Mammary epithelial cell (primary cell): ENCODE measurements at regions of chr9 and their contacts with region 1.

Region 1: DNA sequence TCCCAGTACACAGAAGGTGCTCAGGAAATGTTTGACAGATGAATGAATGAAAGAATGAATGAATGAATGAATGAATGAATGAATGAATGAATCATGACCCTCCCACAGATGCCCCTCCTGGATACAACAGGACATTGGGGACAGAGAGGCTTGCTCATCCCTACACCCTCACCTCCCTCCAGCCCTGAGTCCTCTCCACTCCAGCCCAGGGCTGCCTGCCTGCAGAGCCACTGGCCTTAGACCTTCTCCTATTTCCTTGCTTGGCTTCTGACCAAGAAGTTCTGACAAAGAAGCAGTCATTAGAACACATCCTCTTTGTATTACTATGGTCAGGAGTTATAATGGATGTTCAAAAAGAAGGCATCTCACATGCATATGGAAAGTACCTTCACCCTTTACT is 240.7 kb upstream of the DAPK1 start:
- DNase-seq: peak; percentile 78
- H3K4me3 ChIP-seq: no peak overlapping the region
- H3K27ac ChIP-seq: no peak overlapping the region
- H3K4me1 ChIP-seq: peaks cover 12% of the 10 kb centered on the region
- H3K27me3 ChIP-seq: no peaks in the 10 kb centered on the region
- CTCF ChIP-seq: no peak

Region 2: DNA sequence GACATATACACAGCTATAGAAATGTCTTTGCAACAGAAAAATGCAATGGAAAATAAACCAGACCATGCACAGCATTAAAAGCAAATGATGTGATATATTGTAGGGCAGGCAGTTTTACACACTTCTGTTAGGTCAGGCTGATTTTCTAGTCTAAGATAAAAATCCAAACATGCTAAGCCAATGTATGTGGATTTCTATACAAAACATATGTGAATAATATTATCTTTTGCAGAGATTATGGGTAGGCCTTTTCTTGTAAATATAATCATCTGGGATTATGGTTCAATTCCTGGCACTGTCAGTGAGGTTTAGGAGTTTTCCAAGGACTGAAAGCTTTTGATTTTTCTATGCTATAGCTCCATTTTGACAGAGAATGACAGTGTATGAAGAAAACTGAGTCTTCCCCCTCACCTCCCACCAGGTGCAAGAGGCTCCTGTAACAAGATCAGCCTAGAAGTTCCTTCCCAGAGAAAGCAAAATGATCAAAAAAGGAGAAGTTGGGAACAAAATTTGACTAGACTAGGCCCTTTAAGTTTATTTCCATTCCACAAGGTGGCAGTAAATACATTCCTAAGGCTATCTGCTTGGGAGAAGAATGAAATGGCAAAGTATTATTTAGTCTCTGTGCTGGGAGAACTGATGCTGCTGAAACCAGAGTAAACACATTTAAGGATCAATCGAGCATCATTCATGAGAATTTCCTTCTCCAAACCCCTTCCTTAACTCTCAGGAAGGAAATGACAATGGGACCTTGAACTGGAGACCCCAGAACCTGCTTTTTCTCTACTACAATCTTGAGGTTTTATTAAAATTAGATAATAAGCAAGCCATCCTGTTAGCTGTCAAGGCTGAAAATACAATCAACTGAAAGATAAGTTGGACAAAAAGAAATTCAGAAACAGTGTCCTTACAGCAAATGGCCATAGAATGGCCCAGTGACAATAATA is 769.8 kb before region 1 on chr9:
- CTCF ChIA-PET with region 1: no interaction called
- dilution Hi-C with region 1: no loop called
- in situ Hi-C with region 1: no loop called
- intact Hi-C with region 1: no loop called
- DNase-seq: peak; percentile 40
- H3K4me3 ChIP-seq: no peak overlapping the region
- H3K27ac ChIP-seq: no peak overlapping the region
- H3K4me1 ChIP-seq: peaks cover 8% of the 10 kb centered on the region
- H3K27me3 ChIP-seq: no peaks in the 10 kb centered on the region
- CTCF ChIP-seq: peak; percentile 31 to 69

Region 3: GRCh38 chr9:86614871-86615849 is 641.8 kb before region 1 on chr9:
- CTCF ChIA-PET with region 1: interaction called, 10 read pairs
- dilution Hi-C with region 1: no loop called
- in situ Hi-C with region 1: no loop called
- intact Hi-C with region 1: no loop called
- DNase-seq: peak; percentile 35
- H3K4me3 ChIP-seq: no peak overlapping the region
- H3K27ac ChIP-seq: no peak overlapping the region
- H3K4me1 ChIP-seq: no peaks in the 10 kb centered on the region
- H3K27me3 ChIP-seq: no peaks in the 10 kb centered on the region
- CTCF ChIP-seq: peak; percentile 56 to 62

Region 4: GRCh38 chr9:87201351-87201751 is 55.6 kb before region 1 on chr9:
- CTCF ChIA-PET with region 1: no interaction called
- dilution Hi-C with region 1: no loop called
- in situ Hi-C with region 1: no loop called
- intact Hi-C with region 1: no loop called
- DNase-seq: no peak
- H3K4me3 ChIP-seq: no peak overlapping the region
- H3K27ac ChIP-seq: no peak overlapping the region
- H3K4me1 ChIP-seq: peaks cover 16% of the 10 kb centered on the region
- H3K27me3 ChIP-seq: no peaks in the 10 kb centered on the region
- CTCF ChIP-seq: no peak